Activated CD4-positive, alpha-beta memory T cell treated with anti-CD3 and anti-CD28 coated beads for 36 hours (primary cell): ENCODE measurements at regions of chr7 and their contacts with region 1.

Region 1: DNA sequence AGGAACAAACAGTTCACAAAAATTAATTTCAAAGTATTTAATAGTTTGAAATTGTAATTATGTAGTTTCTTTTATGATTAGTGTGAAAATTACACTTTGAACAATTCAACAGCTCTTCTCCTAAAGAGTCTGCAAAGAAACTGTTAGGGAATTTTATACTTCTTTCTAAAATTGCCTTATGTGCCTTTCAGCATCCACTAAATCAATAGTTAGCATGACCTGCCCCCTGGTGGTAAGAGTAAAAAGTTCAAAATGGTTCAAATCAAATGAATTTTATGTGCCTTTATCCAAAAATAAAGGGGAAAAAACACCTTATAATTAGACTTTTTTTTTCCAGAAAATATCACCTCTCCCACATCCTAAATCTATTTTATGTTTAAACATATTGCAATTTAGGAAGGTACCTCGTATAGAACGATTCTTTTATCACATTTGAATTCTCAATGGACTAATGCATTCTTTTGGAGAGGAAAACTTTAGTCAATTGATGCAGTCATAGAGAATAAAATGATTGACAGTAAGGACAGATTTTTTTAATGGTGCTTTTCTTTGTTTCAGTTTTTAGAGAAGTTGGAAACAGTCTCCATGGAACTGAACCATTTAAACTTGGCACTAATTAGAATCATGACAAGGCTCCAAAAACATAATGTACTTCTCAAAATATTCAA is 163.7 kb downstream of the SEMA3D start:
- DNase-seq: no peak
- H3K4me3 Mint-ChIP-seq: no peak overlapping the region
- H3K27ac Mint-ChIP-seq: no peak overlapping the region
- H3K4me1 Mint-ChIP-seq: no peaks in the 10 kb centered on the region
- H3K27me3 Mint-ChIP-seq: no peaks in the 10 kb centered on the region

Region 2: DNA sequence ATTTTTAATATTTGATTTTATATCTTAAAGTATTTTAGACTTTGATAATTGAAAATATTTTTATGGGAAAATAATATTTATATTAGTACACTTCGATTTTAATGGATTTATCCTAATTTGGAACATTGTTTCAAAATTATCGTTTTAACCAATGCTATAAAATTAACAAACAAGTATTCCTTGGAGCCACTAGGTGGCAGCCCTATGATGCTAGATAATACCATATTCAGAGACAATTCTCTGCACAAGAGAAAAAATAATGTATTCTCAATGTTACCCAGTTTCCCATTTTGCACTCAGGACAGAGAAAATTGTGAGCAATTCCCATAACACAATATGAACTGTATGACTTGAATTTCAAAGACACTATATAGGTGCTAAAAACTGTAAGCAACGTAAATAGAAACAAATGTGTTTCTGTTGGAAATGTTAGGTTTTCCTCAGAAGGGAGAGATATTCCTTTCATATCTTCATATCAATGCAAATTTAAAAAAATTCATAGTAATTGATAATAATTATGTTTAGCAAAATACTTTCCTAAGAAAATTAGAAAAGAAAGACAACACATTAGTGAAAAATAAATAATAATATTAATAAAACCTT is 1612.1 kb before region 1 on chr7:
- CTCF ChIA-PET with region 1: no interaction called
- POLR2A ChIA-PET with region 1: no interaction called
- intact Hi-C with region 1: loop called (anchors 5 kb)
- DNase-seq: no peak
- H3K4me3 Mint-ChIP-seq: no peak overlapping the region
- H3K27ac Mint-ChIP-seq: no peak overlapping the region
- H3K4me1 Mint-ChIP-seq: no peaks in the 10 kb centered on the region
- H3K27me3 Mint-ChIP-seq: no peaks in the 10 kb centered on the region

Region 3: DNA sequence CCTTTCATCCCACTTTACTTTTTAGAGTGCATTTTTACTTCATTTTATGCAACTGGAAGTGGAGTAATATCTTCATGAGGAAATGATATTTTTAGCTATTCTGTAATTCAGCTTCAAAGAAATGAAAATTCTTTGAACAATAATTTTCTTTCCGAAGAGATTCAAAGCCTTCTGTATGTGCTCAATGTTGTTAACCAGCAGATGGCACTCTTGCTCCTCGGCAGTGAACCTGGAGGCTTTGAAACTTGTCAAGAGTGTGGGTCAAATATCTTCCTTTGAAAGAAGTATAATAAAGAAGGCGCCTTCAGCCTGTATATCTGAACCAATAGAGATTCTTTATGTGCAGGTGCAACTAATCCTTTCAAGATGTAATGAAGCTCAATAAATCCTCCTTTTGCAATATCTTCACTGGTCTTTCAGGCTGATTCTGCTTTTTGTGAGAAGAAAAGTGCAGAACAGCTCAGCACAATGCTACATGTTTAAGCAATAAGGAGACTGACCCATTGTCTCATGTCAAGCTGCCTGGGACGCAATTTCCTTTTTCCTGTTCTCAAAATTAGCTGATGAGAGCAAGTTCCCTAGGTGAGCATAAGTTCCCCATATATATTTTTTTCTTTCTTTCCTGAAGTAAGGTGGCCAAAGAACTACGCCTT is 1087.0 kb before region 1 on chr7:
- CTCF ChIA-PET with region 1: interaction called, 13 read pairs
- POLR2A ChIA-PET with region 1: no interaction called
- intact Hi-C with region 1: loop called (anchors 1 kb)
- DNase-seq: peak; percentile 55
- H3K4me3 Mint-ChIP-seq: no peak overlapping the region
- H3K27ac Mint-ChIP-seq: no peak overlapping the region
- H3K4me1 Mint-ChIP-seq: no peaks in the 10 kb centered on the region
- H3K27me3 Mint-ChIP-seq: no peaks in the 10 kb centered on the region

Region 4: DNA sequence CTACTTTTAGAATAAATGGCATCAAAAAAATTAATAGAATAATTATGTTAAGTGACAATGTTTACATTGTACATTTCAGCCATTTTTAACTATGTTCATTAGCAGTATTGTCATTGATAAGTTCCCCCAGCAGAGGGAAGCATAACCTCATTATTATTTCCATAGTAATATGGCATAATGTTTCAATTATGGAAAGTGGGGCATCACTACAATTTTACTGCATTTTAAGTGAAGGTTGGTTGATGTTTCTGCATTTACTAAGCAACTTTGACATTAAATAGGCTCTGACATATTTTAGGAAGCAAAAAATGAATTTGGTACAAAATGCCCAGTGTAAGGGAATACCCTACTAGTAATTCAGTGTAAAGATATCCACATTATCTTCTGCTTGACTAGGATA is 1046.9 kb before region 1 on chr7:
- CTCF ChIA-PET with region 1: no interaction called
- POLR2A ChIA-PET with region 1: no interaction called
- intact Hi-C with region 1: loop called (anchors 1 kb)
- DNase-seq: no peak
- H3K4me3 Mint-ChIP-seq: no peak overlapping the region
- H3K27ac Mint-ChIP-seq: no peak overlapping the region
- H3K4me1 Mint-ChIP-seq: no peaks in the 10 kb centered on the region
- H3K27me3 Mint-ChIP-seq: no peaks in the 10 kb centered on the region

Region 5: GRCh38 chr7:84629640-84630318 is 393.4 kb before region 1 on chr7:
- CTCF ChIA-PET with region 1: no interaction called
- POLR2A ChIA-PET with region 1: no interaction called
- intact Hi-C with region 1: no loop called
- DNase-seq: no peak
- H3K4me3 Mint-ChIP-seq: no peak overlapping the region
- H3K27ac Mint-ChIP-seq: no peak overlapping the region
- H3K4me1 Mint-ChIP-seq: no peaks in the 10 kb centered on the region
- H3K27me3 Mint-ChIP-seq: no peaks in the 10 kb centered on the region